ENCODE measurements at regions of chr15 and their contacts with region 1.

Region 1: GRCh38 chr15:57306161-57306943 is 70.0 kb upstream of the CGNL1 start:
- DNase-seq: peak; percentile 96
- H3K4me3 ChIP-seq: peak overlapping the region; percentile 45
- H3K27ac ChIP-seq: peak overlapping the region; percentile 50
- H3K4me1 ChIP-seq: peaks cover 10% of the 10 kb centered on the region
- H3K27me3 ChIP-seq: no peaks in the 10 kb centered on the region
- CTCF ChIP-seq: peak; percentile 93

Region 2: DNA sequence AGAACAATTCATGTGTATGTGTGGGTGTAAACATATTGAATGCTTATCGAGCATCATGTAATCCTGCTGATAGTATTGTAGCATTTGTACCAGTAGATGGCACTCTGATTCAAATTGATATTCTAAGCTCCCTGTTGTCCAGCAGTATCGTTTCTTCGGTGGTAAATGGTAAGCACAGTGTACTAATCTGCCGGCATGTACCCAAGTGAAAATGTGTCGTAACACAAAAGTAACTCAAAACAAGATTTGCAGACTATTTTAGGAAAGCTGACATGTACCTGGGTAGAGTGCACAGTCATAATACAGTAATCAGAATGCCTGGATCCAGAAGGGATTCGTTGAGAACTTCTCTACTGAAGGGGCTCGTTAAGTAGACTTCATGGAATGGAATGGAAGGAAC is 809.7 kb before region 1 on chr15:
- intact Hi-C with region 1: loop called (anchors 5 kb)
- DNase-seq: no peak
- H3K4me3 ChIP-seq: no peak overlapping the region
- H3K27ac ChIP-seq: no peak overlapping the region
- H3K4me1 ChIP-seq: no peaks in the 10 kb centered on the region
- H3K27me3 ChIP-seq: no peaks in the 10 kb centered on the region
- CTCF ChIP-seq: peak; percentile 59

Region 3: GRCh38 chr15:56821721-56822425 is 484.5 kb before region 1 on chr15:
- intact Hi-C with region 1: loop called (anchors 10 kb)
- DNase-seq: peak; percentile 71
- H3K4me3 ChIP-seq: no peak overlapping the region
- H3K27ac ChIP-seq: no peak overlapping the region
- H3K4me1 ChIP-seq: no peaks in the 10 kb centered on the region
- H3K27me3 ChIP-seq: no peaks in the 10 kb centered on the region
- CTCF ChIP-seq: peak; percentile 53

Region 4: GRCh38 chr15:57146506-57147201 is 159.7 kb before region 1 on chr15:
- intact Hi-C with region 1: loop called (anchors 2 kb)
- DNase-seq: peak; percentile 41
- H3K4me3 ChIP-seq: no peak overlapping the region
- H3K27ac ChIP-seq: no peak overlapping the region
- H3K4me1 ChIP-seq: peaks cover 3% of the 10 kb centered on the region
- H3K27me3 ChIP-seq: no peaks in the 10 kb centered on the region
- CTCF ChIP-seq: peak; percentile 65

Region 5: GRCh38 chr15:57259568-57260040 is 46.7 kb before region 1 on chr15:
- intact Hi-C with region 1: no loop called
- DNase-seq: peak; percentile 68
- H3K4me3 ChIP-seq: no peak overlapping the region
- H3K27ac ChIP-seq: peak overlapping the region; percentile 1
- H3K4me1 ChIP-seq: no peaks in the 10 kb centered on the region
- H3K27me3 ChIP-seq: no peaks in the 10 kb centered on the region
- CTCF ChIP-seq: no peak